Activated CD8-positive, alpha-beta T cell treated with anti-CD3 and anti-CD28 coated beads for 36 hours (primary cell): ENCODE measurements at regions of chr2 and their contacts with region 1.

Region 1: DNA sequence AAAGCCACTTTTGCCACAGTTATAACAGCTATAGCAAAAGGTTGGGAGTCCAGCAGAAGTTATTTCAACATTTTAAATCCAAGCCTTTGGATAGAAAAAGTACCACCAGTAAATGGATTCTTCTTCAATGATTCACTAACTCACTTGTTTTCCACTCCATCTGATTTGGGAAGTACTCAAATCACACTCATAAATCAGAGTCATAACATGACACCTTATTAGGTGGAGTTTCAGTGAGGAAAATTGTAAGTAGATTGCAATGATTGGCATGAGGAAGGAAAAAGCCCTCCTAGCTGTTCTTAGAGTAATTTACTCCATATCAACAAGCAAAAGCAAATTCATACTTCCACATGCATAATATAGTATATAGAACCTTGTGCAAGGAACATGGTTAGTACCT is 132.9 kb downstream of the NR4A2 start:
- DNase-seq: no peak
- ATAC-seq: no peak
- H3K4me3 Mint-ChIP-seq: no peak overlapping the region
- H3K27ac Mint-ChIP-seq: no peak overlapping the region
- H3K4me1 Mint-ChIP-seq: no peaks in the 10 kb centered on the region
- H3K27me3 Mint-ChIP-seq: peaks cover 6% of the 10 kb centered on the region
- CTCF ChIP-seq: no peak

Region 2: DNA sequence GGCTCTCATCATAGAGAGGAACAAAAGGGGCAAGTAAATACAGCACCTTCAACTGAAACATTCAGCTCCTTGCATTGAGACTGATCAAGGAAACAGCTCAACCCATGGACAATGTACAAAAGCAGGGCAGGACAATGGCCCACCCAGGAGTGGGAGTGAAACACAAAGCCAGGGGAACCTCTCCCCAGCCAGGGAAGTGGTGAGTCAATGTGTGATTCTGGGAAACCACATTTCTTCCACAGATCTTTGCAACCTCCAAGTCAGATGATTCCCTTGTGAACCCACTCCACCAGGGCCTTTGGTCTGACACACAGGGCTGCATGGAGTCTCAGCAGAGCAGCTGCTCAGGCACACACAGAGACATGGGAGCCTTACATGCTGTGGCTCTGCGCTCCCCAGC is 161.6 kb before region 1 on chr2:
- CTCF ChIA-PET with region 1: no interaction called
- POLR2A ChIA-PET with region 1: no interaction called
- intact Hi-C with region 1: no loop called
- DNase-seq: no peak
- ATAC-seq: no peak
- H3K4me3 Mint-ChIP-seq: no peak overlapping the region
- H3K27ac Mint-ChIP-seq: no peak overlapping the region
- H3K4me1 Mint-ChIP-seq: no peaks in the 10 kb centered on the region
- H3K27me3 Mint-ChIP-seq: no peaks in the 10 kb centered on the region
- CTCF ChIP-seq: no peak

Region 3: GRCh38 chr2:156215655-156216054 is 16.1 kb after region 1 on chr2:
- CTCF ChIA-PET with region 1: no interaction called
- POLR2A ChIA-PET with region 1: no interaction called
- intact Hi-C with region 1: no loop called
- DNase-seq: no peak
- ATAC-seq: no peak
- H3K4me3 Mint-ChIP-seq: no peak overlapping the region
- H3K27ac Mint-ChIP-seq: no peak overlapping the region
- H3K4me1 Mint-ChIP-seq: no peaks in the 10 kb centered on the region
- H3K27me3 Mint-ChIP-seq: peaks cover 16% of the 10 kb centered on the region
- CTCF ChIP-seq: no peak

Region 4: GRCh38 chr2:156319811-156320485 is 120.4 kb after region 1 on chr2:
- CTCF ChIA-PET with region 1: no interaction called
- POLR2A ChIA-PET with region 1: no interaction called
- intact Hi-C with region 1: loop called (anchors 5 kb)
- DNase-seq: peak; percentile 29
- ATAC-seq: peak; percentile 25
- H3K4me3 Mint-ChIP-seq: peak overlapping the region; percentile 39
- H3K27ac Mint-ChIP-seq: no peak overlapping the region
- H3K4me1 Mint-ChIP-seq: peaks cover 36% of the 10 kb centered on the region
- H3K27me3 Mint-ChIP-seq: peaks cover 71% of the 10 kb centered on the region
- CTCF ChIP-seq: no peak